Lower lobe of right lung (tissue), 2 donors: ENCODE measurements at regions of chr1 and their contacts with region 1.

Region 1: GRCh38 chr1:239413916-239414315 is 27.5 kb downstream of the CHRM3 start:
- DNase-seq: no peak
- ATAC-seq: no peak
- H3K4me3 ChIP-seq: no peak overlapping the region
- H3K27ac ChIP-seq: no peak overlapping the region
- H3K4me1 ChIP-seq: no peaks in the 10 kb centered on the region
- H3K27me3 ChIP-seq: no peaks in the 10 kb centered on the region
- CTCF ChIP-seq: no peak

Region 2: DNA sequence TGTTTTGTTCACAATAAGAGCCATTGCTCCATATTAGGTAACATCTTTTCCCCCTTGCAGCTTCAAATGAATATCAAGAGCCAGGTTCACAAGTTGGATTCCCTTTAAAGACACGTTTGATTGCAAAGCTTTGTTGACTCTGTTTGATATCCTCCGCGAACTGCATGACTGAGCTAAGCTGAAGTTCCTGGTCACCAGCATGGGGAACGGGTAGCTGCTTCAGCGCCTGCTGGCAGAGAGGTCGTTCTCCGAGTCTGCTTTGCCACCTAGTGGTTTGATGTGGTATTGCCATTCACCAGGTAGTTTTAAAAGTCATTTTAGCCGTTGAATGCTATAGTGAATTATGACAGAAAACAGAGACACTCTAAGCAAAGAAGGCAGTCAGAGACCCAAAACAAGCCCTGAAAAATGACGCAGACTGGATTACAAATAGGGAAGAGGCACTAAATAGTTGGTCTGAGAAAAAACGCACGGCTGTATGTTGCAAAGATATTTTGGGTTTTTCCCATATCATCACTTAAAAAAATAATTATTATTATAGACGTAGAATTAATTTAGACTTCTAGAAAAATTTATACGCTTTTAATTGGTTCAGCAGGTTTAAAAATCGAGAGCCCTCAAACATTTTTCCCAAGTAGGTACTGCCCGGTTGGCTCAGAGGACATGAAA is 484.3 kb after region 1 on chr1:
- intact Hi-C with region 1: loop called (anchors 10 kb)
- DNase-seq: peak; percentile 81
- ATAC-seq: peak; percentile 94
- H3K4me3 ChIP-seq: no peak overlapping the region
- H3K27ac ChIP-seq: no peak overlapping the region
- H3K4me1 ChIP-seq: peaks cover 11% of the 10 kb centered on the region
- H3K27me3 ChIP-seq: no peaks in the 10 kb centered on the region
- CTCF ChIP-seq: peak; percentile 93